ENCODE measurements at regions of chr7 and their contacts with region 1.

Region 1: GRCh38 chr7:11427686-11428273 is 404.2 kb downstream of the THSD7A start:
- DNase-seq: peak; percentile 49
- CTCF ChIP-seq: peak; percentile 78

Region 2: DNA sequence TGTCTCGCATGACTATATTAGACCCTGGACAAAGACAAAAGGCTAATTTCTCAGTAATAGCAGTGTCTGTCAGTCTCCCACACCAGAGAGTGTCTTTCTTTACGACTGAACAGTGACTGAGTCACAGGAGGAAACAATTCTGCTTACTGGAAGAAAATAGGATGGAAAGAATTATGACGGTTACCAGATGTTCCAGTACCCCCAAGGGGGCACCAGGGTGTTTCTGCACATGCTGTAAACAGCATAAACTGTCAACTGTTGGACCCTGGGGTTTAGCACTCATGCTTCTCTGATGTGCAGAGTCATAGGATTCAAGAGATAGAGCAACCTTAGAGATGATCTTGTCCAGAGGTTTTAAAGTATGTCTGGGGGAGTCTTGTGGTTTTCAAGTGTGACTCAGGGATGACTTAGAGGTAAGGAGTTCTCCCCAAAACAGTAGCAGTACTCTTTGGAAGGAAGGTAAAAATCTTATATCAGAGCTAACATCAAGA is 112.5 kb after region 1 on chr7:
- in situ Hi-C with region 1: loop called (anchors 25 kb)
- DNase-seq: no peak
- CTCF ChIP-seq: no peak

Region 3: GRCh38 chr7:12222889-12223579 is 795.3 kb after region 1 on chr7:
- in situ Hi-C with region 1: no loop called
- DNase-seq: no peak
- CTCF ChIP-seq: no peak

Measured in GM13977 (cell line).